ENCODE measurements at regions of chr15 and their contacts with region 1.

Region 1: DNA sequence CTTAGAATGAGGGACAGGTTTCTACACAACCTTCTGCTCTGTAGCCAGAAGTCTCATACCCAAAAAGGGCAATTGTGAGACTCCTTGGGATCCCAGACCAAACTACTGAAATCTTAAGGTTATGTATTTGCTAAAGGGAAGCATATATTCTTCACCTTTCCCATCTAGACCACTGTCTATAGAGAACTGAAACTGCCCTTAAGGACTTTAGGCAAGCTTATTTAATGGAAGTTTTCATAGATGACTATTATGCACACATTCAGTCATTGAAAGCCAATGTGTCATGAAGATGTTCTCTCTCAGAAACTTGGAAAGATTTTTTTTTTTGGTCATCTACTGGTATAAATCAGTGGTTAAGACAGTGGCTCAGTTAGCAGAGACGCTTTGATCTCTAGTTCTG is 365.3 kb downstream of the MCTP2 start:
- DNase-seq: no peak

Region 2: GRCh38 chr15:94611656-94612055 is 14.9 kb after region 1 on chr15:
- intact Hi-C with region 1: no loop called
- DNase-seq: no peak

Region 3: GRCh38 chr15:96535148-96535547 is 1938.4 kb after region 1 on chr15:
- intact Hi-C with region 1: loop called in 1 of 2 experiments (anchors 10 kb)
- DNase-seq: no peak